CD4-positive, alpha-beta T cell (primary cell): ENCODE measurements at regions of chr10 and their contacts with region 1.

Region 1: DNA sequence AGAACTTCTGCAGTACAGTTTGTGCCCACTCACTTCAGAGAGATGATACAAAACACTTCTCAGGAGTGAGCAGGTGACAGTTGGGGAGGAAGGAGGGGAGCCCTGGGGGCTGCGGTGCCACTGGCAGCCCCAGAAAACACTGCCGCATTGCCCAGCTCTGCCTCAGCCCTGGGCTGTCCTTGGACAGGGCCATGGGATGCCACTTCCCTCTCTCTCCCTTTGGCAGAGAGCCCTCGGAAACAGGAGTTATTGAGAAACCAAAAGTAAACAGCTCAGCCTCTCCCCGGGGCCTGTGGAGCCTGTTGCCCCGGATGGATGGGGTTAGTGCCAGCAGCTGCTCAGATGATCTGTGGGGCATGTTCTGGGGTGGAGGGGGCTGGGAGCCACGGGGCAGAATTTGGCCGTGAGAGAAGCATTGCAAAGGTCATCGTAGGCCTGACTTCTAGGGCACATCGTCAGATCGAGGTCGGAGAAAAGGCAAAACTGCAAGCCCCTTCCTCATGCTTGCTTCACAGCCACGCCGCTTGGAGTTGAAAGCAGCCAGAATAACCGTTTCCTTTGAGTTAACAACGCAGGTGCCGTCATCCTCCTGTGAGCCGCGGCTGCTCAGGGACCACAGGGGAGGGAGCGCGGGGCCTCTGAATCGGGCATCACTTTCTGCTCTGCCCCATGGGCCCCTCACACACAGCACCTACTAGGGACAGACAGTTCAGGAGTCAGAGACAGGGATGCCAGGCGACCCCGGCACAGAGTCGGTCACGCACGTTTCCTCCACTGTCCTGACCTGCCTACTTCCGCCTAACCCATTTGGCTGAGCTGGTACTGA is 256.4 kb downstream of the CAMK1D start:
- DNase-seq: peak; percentile 27 to 73 (median 50)
- ATAC-seq: peak; percentile 85
- H3K4me3 ChIP-seq: peak overlapping the region; percentile 56
- H3K4me3 Mint-ChIP-seq: peak overlapping the region; percentile 94
- H3K27ac ChIP-seq: peak overlapping the region; percentile 76 to 77
- H3K27ac Mint-ChIP-seq: peak overlapping the region; percentile 99
- H3K4me1 ChIP-seq: peaks cover 23% of the 10 kb centered on the region
- H3K4me1 Mint-ChIP-seq: peaks cover 55% of the 10 kb centered on the region
- H3K27me3 ChIP-seq: no peaks in the 10 kb centered on the region
- H3K27me3 Mint-ChIP-seq: no peaks in the 10 kb centered on the region
- CTCF ChIP-seq: no peak

Region 2: DNA sequence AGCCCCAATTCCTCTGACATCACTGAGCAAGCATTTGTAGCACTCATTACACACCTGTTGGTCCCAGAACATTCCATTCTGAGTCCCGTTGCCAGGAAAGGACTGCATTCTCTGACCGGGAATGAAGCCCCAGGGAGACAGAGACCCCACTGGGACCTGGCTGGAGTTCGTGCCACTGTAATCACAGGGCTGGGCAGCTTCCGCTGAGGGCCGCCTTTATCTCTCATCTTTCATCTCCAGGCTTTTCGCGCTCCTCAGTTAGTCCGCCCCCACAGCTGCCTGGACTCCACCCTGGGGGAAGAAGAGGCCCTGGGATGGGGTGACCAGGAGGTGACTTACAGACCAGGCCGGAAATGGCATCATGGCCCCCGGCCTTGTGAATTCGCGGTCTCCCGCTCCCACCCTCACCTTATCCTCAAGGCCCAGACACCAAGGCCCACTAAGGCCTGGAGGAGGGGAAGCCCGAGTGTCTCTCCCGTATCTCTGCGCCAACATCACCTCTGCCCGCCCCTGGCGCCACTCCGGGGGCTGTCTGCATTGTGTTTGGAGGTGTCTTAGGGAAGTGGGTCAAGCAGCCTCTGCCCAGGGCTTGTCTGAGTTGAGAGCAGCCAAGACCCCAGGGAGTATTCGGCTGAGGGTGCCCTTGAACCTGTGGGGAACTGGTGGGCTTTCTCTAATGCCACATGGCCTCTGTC is 707.3 kb before region 1 on chr10:
- CTCF ChIA-PET with region 1: no interaction called
- POLR2A ChIA-PET with region 1: no interaction called
- intact Hi-C with region 1: no loop called
- DNase-seq: no peak
- ATAC-seq: no peak
- H3K4me3 ChIP-seq: no peak overlapping the region
- H3K4me3 Mint-ChIP-seq: no peak overlapping the region
- H3K27ac ChIP-seq: no peak overlapping the region
- H3K27ac Mint-ChIP-seq: no peak overlapping the region
- H3K4me1 ChIP-seq: no peaks in the 10 kb centered on the region
- H3K4me1 Mint-ChIP-seq: no peaks in the 10 kb centered on the region
- H3K27me3 ChIP-seq: no peaks in the 10 kb centered on the region
- H3K27me3 Mint-ChIP-seq: no peaks in the 10 kb centered on the region
- CTCF ChIP-seq: no peak

Region 3: DNA sequence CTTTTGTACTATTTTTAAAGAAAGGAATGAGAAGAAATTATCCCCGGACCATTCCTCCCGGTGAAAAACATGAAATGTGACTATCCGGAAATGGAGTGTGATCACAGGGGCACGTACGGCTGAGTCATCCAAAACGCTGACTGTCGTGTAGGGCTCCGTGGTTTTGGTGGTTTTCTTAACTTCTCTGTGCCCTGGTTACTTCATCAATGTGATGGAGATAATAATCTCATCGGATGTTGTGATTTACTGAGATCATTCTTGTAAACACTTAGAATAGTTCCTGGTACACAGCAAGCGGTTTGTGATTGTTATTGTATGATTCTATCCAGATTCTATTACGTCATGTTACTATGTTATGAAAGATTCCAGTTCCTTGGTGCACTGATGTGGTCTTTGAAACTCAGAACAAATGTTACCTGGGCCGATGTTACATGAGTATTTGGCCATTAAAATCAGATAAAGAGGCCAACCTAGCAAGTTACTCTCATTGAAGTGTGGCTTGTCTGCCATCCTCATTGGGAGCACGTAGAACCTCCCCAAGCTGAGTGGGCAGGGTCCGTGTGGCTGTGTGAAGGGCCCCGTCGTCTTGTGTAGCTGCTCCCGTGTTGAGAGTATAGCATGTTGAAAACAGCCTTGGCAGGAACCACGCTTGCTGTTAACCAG is 156.9 kb before region 1 on chr10:
- CTCF ChIA-PET with region 1: no interaction called
- POLR2A ChIA-PET with region 1: no interaction called
- intact Hi-C with region 1: loop called in 1 of 2 experiments (anchors 5 kb)
- DNase-seq: peak; percentile 53 to 96 (median 68)
- ATAC-seq: peak; percentile 87
- H3K4me3 ChIP-seq: peak overlapping the region; percentile 21
- H3K4me3 Mint-ChIP-seq: peak overlapping the region; percentile 72
- H3K27ac ChIP-seq: peak overlapping the region; percentile 58 to 72
- H3K27ac Mint-ChIP-seq: peak overlapping the region; percentile 88
- H3K4me1 ChIP-seq: peaks cover 18% of the 10 kb centered on the region
- H3K4me1 Mint-ChIP-seq: peaks cover 44% of the 10 kb centered on the region
- H3K27me3 ChIP-seq: no peaks in the 10 kb centered on the region
- H3K27me3 Mint-ChIP-seq: no peaks in the 10 kb centered on the region
- CTCF ChIP-seq: no peak

Region 4: DNA sequence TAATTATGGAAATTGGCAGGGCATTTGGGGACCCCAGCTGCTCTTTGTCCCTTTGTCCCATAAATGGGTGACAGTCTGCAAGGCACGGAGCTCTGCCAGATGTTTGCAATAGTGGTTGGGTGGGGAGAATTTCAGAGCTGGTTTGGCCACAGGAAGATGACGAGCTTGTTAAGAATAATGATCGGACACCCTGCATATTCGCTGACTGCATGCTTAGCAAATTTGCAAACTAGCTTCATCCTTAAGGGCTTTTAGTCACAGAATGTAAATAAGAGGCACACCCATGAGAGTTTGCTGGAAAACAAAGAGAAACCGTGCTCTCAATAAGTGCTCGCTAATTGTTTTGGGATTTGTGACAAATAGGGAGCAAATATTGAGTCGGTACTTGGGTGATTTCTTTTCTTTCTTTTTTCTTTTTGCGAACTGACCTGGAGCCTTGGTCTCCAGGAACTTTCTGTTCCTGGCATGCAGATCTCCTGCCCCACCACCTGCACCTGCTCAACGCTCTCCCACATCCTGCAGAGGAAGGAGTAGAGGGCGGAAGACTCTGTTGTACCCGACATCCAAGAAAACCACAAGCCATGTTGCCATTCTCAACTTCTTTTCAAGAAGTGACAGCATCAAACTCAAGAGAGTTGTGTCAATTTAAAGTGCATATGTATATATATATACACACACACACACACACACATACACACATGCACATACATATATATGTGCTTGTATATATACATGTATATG is 17.5 kb before region 1 on chr10:
- CTCF ChIA-PET with region 1: interaction called, 3 read pairs
- POLR2A ChIA-PET with region 1: interaction called, 14 read pairs
- intact Hi-C with region 1: loop called in 1 of 2 experiments (anchors 2 kb)
- DNase-seq: peak in 7 of 14 experiments; percentile 17 to 72 (median 51)
- ATAC-seq: peak; percentile 84
- H3K4me3 ChIP-seq: peak overlapping the region; percentile 43
- H3K4me3 Mint-ChIP-seq: peak overlapping the region; percentile 76
- H3K27ac ChIP-seq: no peak overlapping the region
- H3K27ac Mint-ChIP-seq: peak overlapping the region; percentile 96
- H3K4me1 ChIP-seq: peaks cover 36% of the 10 kb centered on the region
- H3K4me1 Mint-ChIP-seq: peaks cover 86% of the 10 kb centered on the region
- H3K27me3 ChIP-seq: no peaks in the 10 kb centered on the region
- H3K27me3 Mint-ChIP-seq: no peaks in the 10 kb centered on the region
- CTCF ChIP-seq: no peak

Region 5: DNA sequence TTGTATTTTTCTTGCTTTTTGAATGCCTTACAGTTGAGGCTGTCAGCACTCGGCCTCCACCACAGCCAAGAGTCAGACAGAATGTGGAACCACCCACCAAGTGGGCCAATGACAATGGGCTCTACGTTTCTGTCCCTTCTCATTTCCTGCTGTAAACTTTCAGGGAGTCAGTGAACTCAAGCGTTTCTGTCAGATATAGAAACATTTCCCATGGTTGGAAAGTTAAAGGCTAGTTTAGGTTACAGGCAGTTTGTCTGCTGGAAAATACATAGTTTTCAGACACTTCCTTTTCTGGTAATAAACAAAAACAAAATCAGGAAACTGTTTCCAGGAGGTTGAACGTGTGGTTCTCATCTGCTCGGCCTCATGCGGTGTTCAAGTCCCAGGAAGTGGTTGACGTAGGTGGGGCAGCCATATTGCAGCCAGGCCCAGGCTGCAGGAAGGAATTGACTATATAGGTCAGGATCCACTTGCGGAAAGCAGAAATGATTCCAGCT is 11.3 kb before region 1 on chr10:
- CTCF ChIA-PET with region 1: interaction called, 3 read pairs
- POLR2A ChIA-PET with region 1: interaction called, 16 read pairs
- intact Hi-C with region 1: loop called in 1 of 2 experiments (anchors 2 kb)
- DNase-seq: peak in 12 of 14 experiments; percentile 7 to 82 (median 30)
- ATAC-seq: peak; percentile 80
- H3K4me3 ChIP-seq: no peak overlapping the region
- H3K4me3 Mint-ChIP-seq: peak overlapping the region; percentile 75
- H3K27ac ChIP-seq: peak overlapping the region; percentile 32
- H3K27ac Mint-ChIP-seq: peak overlapping the region; percentile 96
- H3K4me1 ChIP-seq: peaks cover 53% of the 10 kb centered on the region
- H3K4me1 Mint-ChIP-seq: peaks cover 96% of the 10 kb centered on the region
- H3K27me3 ChIP-seq: no peaks in the 10 kb centered on the region
- H3K27me3 Mint-ChIP-seq: no peaks in the 10 kb centered on the region
- CTCF ChIP-seq: no peak

Region 6: DNA sequence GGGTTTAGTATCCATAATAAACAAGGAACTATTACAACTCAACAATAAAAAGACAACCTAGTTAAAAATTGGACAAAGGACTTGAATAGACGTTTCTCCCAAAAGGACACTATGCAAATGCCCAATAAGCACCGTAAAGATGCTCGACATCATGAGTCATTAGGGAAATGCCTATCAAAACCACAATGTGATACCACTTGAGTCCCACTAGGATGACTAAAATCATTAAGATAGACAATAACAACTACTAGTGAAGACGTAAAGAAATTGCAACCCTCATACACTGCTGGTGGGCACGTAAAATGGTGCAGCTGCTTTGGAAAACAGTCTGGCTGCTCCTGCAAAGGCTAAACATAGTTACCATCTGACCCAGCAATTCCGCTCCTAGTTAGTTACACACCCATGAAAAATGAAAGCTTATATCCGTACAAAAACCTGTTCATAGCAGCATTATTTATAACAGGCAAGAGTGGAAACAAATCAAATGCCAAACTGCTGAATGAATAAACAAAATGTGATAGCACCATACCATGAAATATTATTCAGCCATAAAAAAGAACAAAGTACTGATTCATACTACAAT is 378.5 kb after region 1 on chr10:
- CTCF ChIA-PET with region 1: no interaction called
- POLR2A ChIA-PET with region 1: no interaction called
- intact Hi-C with region 1: no loop called
- DNase-seq: no peak
- ATAC-seq: no peak
- H3K4me3 ChIP-seq: no peak overlapping the region
- H3K4me3 Mint-ChIP-seq: no peak overlapping the region
- H3K27ac ChIP-seq: no peak overlapping the region
- H3K27ac Mint-ChIP-seq: no peak overlapping the region
- H3K4me1 ChIP-seq: no peaks in the 10 kb centered on the region
- H3K4me1 Mint-ChIP-seq: no peaks in the 10 kb centered on the region
- H3K27me3 ChIP-seq: peaks cover 0 to 9% of the 10 kb centered on the region in 2 experiments
- H3K27me3 Mint-ChIP-seq: peaks cover 10% of the 10 kb centered on the region
- CTCF ChIP-seq: no peak